PC-3 (cell line): ENCODE measurements at regions of chr1 and their contacts with region 1.

Region 1: GRCh38 chr1:36385410-36386257 is at the start of gene STK40:
- DNase-seq: peak; percentile 99
- ATAC-seq: peak; percentile 82
- H3K4me3 ChIP-seq: peak within 1 kb of the TSS; percentile 97
- H3K27ac ChIP-seq: peak within 1 kb of the TSS; percentile 96
- H3K4me1 ChIP-seq: peaks cover 21% of the 10 kb centered on the region
- H3K27me3 ChIP-seq: no peaks in the 10 kb centered on the region
- CTCF ChIP-seq: no peak
- total RNA-seq, gene STK40: 14.4 and 15.9 TPM in 2 replicates

Region 2: DNA sequence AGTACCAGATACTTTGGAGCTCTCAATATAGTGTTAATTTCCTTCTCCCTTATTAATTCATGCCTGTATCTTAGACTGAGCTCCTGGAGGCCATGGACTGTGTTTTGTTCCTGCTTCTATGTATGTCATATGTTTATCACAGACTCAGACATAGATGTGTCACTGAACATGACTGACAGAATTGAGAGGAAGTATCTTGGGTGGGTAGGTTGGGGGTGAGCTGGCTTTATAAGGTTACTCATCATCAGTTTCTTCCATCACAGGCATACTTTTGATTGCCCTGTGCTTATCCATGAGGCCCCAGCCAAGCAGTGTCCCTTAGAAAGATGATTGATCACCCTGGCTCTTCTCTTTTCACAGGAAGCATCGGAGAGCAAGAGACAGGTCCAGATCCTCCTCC is 85.1 kb before region 1 on chr1:
- CTCF ChIA-PET with region 1: interaction called, 6 read pairs
- POLR2A ChIA-PET with region 1: no interaction called
- intact Hi-C with region 1: loop called (anchors 1 kb)
- DNase-seq: peak; percentile 76
- ATAC-seq: peak; percentile 29
- H3K4me3 ChIP-seq: peak overlapping the region; percentile 19; the same call in 1 of the 2 replicates
- H3K27ac ChIP-seq: peak overlapping the region; percentile 86
- H3K4me1 ChIP-seq: peaks cover 33% of the 10 kb centered on the region
- H3K27me3 ChIP-seq: no peaks in the 10 kb centered on the region
- CTCF ChIP-seq: no peak

Region 3: GRCh38 chr1:36350659-36351226 is 34.9 kb before region 1 on chr1:
- CTCF ChIA-PET with region 1: interaction called, 3 read pairs
- POLR2A ChIA-PET with region 1: interaction called, 15 read pairs
- intact Hi-C with region 1: no loop called
- DNase-seq: peak; percentile 85
- ATAC-seq: peak; percentile 69
- H3K4me3 ChIP-seq: no peak overlapping the region; the same call in 1 of the 2 replicates
- H3K27ac ChIP-seq: peak overlapping the region; percentile 92
- H3K4me1 ChIP-seq: peaks cover 49% of the 10 kb centered on the region
- H3K27me3 ChIP-seq: no peaks in the 10 kb centered on the region
- CTCF ChIP-seq: no peak

Region 4: DNA sequence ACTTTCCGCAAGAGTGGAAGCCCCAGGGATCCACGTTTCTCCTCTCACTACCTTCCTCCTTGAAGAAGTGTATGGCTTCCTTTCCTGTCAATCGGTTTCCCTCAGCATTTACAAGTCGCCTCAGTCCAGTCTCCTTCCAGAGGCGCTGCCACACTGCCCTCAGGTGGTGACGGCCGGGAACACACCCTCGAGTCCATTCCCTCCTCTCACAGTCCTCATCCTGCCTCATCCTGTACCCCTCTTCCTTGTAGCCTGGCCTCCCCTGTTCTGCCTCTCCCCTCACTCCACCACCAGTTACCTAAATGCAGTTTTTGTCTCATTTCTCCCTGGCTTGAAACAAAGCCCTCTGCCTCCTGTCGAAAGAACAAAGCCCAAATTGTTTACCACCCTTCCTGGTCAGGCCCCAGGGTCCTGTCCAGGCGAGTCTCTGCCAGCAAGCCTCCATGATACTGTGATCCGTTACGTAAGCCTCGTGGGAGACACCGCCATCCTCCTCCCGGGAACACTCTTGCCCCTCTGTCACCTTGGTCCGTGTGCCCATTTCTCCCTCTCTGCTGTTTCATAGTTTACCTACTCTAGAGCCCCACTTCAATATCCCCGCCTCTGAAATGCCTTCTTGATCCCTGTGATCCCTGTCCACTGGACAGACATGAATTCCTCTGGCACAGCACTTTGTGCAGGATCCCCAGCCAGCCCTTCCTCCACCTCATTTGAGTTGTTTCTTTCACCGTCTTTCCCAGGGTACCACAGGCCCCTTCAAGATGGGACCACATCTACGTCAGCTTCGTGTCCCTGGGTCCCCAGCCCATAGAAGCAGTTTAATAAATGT is 35.4 kb after region 1 on chr1:
- CTCF ChIA-PET with region 1: no interaction called
- POLR2A ChIA-PET with region 1: no interaction called
- intact Hi-C with region 1: no loop called
- DNase-seq: peak; percentile 95
- ATAC-seq: peak; percentile 92
- H3K4me3 ChIP-seq: no peak overlapping the region
- H3K27ac ChIP-seq: no peak overlapping the region
- H3K4me1 ChIP-seq: peaks cover 20% of the 10 kb centered on the region
- H3K27me3 ChIP-seq: no peaks in the 10 kb centered on the region
- CTCF ChIP-seq: peak; percentile 94

Region 5: DNA sequence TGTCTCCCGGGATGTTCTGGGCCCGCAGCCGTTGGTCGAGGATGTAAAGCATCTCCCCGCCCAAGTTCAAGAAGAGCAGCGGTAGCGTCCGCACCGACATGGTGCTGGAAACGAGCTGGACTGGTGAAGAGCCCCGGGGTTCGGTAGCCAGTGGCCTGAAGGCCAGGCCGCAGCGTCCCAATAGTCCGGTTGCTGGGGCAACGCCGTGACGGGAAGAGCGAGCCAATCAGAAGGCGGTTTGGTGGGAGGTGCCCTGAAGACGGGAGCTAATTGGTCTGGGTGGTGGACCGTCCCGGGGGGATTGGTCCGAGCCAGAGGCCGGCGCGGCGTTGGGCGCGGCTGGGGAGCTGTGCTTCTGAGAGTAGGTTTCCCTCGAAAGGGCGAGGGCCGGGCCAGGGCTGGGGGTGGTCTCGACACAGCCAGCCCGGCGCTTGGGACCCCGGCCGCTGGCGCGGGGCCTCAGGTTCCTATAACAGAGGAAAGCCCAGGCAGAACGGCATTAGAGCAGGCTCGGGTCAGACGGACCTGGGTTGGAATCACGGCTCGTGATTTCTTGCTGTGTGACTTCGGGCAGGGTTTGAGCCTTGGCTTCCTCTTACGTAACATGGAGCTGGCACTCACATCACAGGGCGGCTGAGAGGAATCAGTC is 64.8 kb after region 1 on chr1 and contains the start of gene OSCP1:
- CTCF ChIA-PET with region 1: no interaction called
- POLR2A ChIA-PET with region 1: interaction called, 3 read pairs
- intact Hi-C with region 1: loop called (anchors 1 kb)
- DNase-seq: peak; percentile 95
- ATAC-seq: peak; percentile 96
- H3K4me3 ChIP-seq: peak within 1 kb of the TSS; percentile 71
- H3K27ac ChIP-seq: peak within 1 kb of the TSS; percentile 47
- H3K4me1 ChIP-seq: peaks cover 10% of the 10 kb centered on the region
- H3K27me3 ChIP-seq: no peaks in the 10 kb centered on the region
- CTCF ChIP-seq: no peak
- total RNA-seq, gene OSCP1: 3.8 and 7.3 TPM in 2 replicates

Region 6: DNA sequence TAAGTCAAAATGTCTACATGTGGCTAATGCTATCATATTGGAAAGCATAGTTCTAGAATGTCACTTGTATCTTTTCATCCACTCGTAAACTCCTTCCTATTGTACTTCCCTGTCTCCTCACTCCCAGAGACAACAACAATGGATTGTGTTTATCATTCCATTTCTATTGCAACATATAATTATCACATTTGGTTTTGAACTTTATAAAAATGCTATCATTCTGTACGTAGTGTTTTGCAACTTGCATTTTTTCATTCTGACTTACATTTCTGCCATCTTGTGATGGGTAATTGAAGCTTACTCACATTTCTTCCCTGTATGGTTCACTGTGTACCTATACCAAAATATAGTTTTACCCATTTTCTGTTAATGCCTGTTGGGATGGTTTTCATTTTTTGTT is 111.6 kb after region 1 on chr1:
- CTCF ChIA-PET with region 1: no interaction called
- POLR2A ChIA-PET with region 1: no interaction called
- intact Hi-C with region 1: no loop called
- DNase-seq: no peak
- ATAC-seq: no peak
- H3K4me3 ChIP-seq: no peak overlapping the region
- H3K27ac ChIP-seq: no peak overlapping the region
- H3K4me1 ChIP-seq: no peaks in the 10 kb centered on the region
- H3K27me3 ChIP-seq: peaks cover 40% of the 10 kb centered on the region
- CTCF ChIP-seq: no peak

Region 7: DNA sequence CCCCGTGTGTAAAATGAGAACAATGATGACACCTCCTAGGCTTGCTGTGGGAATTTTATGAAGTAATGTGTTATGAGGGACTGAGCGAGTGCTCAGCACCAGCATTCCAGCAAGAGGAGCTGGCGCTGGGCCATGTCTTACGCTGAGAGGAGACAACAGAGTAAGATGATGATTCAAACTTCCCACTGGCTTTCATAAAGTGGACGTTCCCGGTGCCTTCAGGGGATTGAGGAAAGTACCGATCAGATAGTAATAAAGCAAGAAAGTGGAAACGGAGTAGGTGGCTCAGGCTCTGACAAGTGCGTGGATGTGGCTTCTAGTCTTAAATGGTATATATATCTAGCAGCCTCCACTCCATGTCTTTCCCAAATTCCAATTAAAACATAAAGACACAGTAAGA is 1355.5 kb after region 1 on chr1:
- CTCF ChIA-PET with region 1: no interaction called
- POLR2A ChIA-PET with region 1: interaction called, 20 read pairs
- intact Hi-C with region 1: no loop called
- DNase-seq: peak; percentile 94
- ATAC-seq: peak; percentile 58
- H3K4me3 ChIP-seq: peak overlapping the region; percentile 19; the same call in 1 of the 2 replicates
- H3K27ac ChIP-seq: no peak overlapping the region
- H3K4me1 ChIP-seq: peaks cover 17% of the 10 kb centered on the region
- H3K27me3 ChIP-seq: no peaks in the 10 kb centered on the region
- CTCF ChIP-seq: no peak